Sigmoid colon (tissue), 7 donors: ENCODE measurements at regions of chr6 and their contacts with region 1.

Region 1: GRCh38 chr6:3157131-3157927 is at the start of gene TUBB2A:
- DNase-seq: peak; percentile 95
- H3K4me3 ChIP-seq: peak within 1 kb of the TSS; percentile 66 to 99 (median 71)
- H3K27ac ChIP-seq: peak within 1 kb of the TSS; percentile 90 to 99 (median 96)
- H3K4me1 ChIP-seq: peaks cover 0 to 34% (median 14%) of the 10 kb centered on the region in 4 donors
- H3K27me3 ChIP-seq: no peaks in the 10 kb centered on the region
- CTCF ChIP-seq: peak in 2 of 4 experiments; percentile 12 to 52
- EP300 ChIP-seq: peak in 1 of 4 donors; percentile 45
- POLR2A ChIP-seq: peak; percentile 56 to 81
- total RNA-seq, gene TUBB2A: 54.5 to 106 (median 97.9) TPM

Region 2: DNA sequence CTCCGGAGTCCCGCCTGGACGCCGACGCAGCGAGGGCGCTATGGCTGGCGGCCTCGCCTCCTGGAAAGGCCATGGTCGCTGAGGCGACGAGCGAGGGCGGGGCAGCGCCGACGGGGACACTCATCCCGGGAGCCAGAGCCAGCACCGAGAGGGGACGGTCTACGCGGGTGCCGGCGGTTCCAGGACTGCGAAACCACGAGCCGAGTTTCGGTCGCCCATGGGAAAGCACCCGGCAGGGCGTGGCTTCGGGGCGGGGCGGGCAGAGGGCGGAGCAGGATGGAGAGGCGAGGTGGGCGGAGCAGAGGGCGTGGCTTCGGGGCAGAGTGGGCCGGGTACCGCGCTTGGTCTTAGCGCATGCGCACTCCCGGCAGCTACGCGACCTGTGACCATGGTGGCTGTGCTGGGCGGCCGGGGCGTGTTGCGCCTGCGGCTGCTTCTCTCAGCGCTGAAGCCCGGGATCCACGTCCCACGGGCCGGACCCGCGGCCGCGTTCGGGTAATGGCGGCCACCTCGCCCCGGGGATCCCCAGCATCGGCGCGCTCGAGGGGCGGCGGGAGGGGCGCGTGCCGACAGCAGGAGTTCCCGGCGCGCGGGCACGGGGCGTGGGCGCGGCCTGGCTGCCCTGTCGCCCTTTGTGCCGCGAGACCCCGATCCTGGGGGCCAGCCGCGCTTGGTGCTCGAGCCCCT is 38.8 kb before region 1 on chr6 and contains the start of gene BPHL:
- intact Hi-C with region 1: loop called (anchors 2 kb)
- DNase-seq: peak; percentile 98
- H3K4me3 ChIP-seq: peak within 1 kb of the TSS; percentile 53 to 91 (median 84)
- H3K27ac ChIP-seq: peak within 1 kb of the TSS; percentile 88 to 94 (median 92)
- H3K4me1 ChIP-seq: peaks cover 0 to 13% (median 12%) of the 10 kb centered on the region in 4 donors
- H3K27me3 ChIP-seq: no peaks in the 10 kb centered on the region
- CTCF ChIP-seq: no peak
- EP300 ChIP-seq: no peak
- POLR2A ChIP-seq: peak; percentile 46 to 56
- total RNA-seq, gene BPHL: 8.6 to 11.1 (median 10.5) TPM